Psoas muscle (tissue), 8 donors: ENCODE measurements at regions of chr9 and their contacts with region 1.

Region 1: DNA sequence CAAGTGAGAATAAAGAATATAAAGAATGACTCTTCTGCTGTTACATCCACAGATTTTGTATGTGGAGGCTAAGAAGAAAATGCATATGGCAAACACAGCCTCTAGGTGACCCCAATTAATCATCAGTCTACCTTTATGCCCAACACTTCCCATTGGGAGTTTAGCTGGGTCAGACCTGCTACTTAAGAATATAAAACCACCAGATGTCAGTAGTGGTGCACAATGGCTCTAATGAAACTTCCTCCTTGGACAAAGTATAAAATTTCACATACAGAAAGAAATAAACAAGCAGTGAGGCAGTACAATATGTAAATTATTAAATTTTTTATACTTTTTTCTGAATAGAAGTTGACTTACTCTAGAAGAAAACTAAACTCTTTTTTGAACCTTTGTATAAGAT is 539.9 kb downstream of the BRINP1 start:
- DNase-seq: no peak
- ATAC-seq: peak in 2 of 4 donors; percentile 62 to 76
- H3K4me3 ChIP-seq: no peak overlapping the region
- H3K27ac ChIP-seq: no peak overlapping the region
- H3K4me1 ChIP-seq: no peaks in the 10 kb centered on the region
- H3K27me3 ChIP-seq: no peaks in the 10 kb centered on the region
- CTCF ChIP-seq: peak; percentile 67

Region 2: GRCh38 chr9:119289740-119290433 is 460.6 kb after region 1 on chr9:
- intact Hi-C with region 1: loop called (anchors 1 to 5 kb)
- DNase-seq: no peak
- ATAC-seq: peak; percentile 67 to 91 (median 78)
- H3K4me3 ChIP-seq: no peak overlapping the region
- H3K27ac ChIP-seq: no peak overlapping the region
- H3K4me1 ChIP-seq: no peaks in the 10 kb centered on the region
- H3K27me3 ChIP-seq: no peaks in the 10 kb centered on the region
- CTCF ChIP-seq: peak; percentile 88

Region 3: GRCh38 chr9:119365291-119366027 is 536.1 kb after region 1 on chr9:
- intact Hi-C with region 1: loop called in 1 of 2 experiments (anchors 5 kb)
- DNase-seq: no peak
- ATAC-seq: no peak
- H3K4me3 ChIP-seq: no peak overlapping the region
- H3K27ac ChIP-seq: no peak overlapping the region
- H3K4me1 ChIP-seq: no peaks in the 10 kb centered on the region
- H3K27me3 ChIP-seq: peaks cover 0 to 45% (median 21%) of the 10 kb centered on the region in 3 donors
- CTCF ChIP-seq: peak; percentile 32